ENCODE measurements at regions of chr5 and their contacts with region 1.

Region 1: GRCh38 chr5:119267958-119268386 is 87.8 kb upstream of the TNFAIP8 start:
- DNase-seq: peak; percentile 89
- H3K4me3 ChIP-seq: peak overlapping the region; percentile 72 to 81
- H3K27ac ChIP-seq: peak overlapping the region; percentile 86 to 93
- H3K4me1 ChIP-seq: peaks cover 5% of the 10 kb centered on the region
- H3K27me3 ChIP-seq: no peaks in the 10 kb centered on the region
- CTCF ChIP-seq: peak in 1 of 4 experiments; percentile 25
- POLR2A ChIP-seq: no peak

Region 2: DNA sequence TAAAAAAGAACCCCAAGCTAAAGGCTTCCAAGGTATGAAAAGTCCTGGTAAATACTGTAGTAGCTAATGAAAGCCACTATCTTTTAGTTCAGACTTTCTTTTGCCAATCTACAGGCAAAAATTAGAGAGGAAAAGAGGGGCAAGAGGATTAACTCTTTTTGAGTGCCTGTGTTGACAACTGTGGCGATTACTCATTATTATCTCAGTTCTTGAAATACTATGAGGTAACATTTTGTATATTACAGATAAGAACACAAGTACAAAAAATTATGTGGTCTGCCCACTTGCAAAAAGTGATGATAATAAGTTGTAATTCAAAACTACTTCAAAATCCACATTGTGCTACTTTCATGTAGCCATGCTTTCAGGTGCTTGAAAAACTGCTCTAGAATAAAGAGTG is 423.6 kb before region 1 on chr5:
- intact Hi-C with region 1: no loop called
- DNase-seq: no peak
- H3K4me3 ChIP-seq: no peak overlapping the region
- H3K27ac ChIP-seq: no peak overlapping the region
- H3K4me1 ChIP-seq: no peaks in the 10 kb centered on the region
- H3K27me3 ChIP-seq: no peaks in the 10 kb centered on the region
- CTCF ChIP-seq: no peak
- POLR2A ChIP-seq: no peak

Region 3: GRCh38 chr5:119070828-119071572 is 197.0 kb before region 1 on chr5 and contains the start of gene DMXL1:
- intact Hi-C with region 1: loop called (anchors 5 kb)
- DNase-seq: peak; percentile 100
- H3K4me3 ChIP-seq: peak within 1 kb of the TSS; percentile 84 to 91
- H3K27ac ChIP-seq: peak within 1 kb of the TSS; percentile 97 to 98
- H3K4me1 ChIP-seq: peaks cover 3% of the 10 kb centered on the region
- H3K27me3 ChIP-seq: no peaks in the 10 kb centered on the region
- CTCF ChIP-seq: peak in 1 of 4 experiments; percentile 8
- POLR2A ChIP-seq: peak; percentile 68
- total RNA-seq, gene DMXL1: 89.2 to 180 TPM

Region 4: DNA sequence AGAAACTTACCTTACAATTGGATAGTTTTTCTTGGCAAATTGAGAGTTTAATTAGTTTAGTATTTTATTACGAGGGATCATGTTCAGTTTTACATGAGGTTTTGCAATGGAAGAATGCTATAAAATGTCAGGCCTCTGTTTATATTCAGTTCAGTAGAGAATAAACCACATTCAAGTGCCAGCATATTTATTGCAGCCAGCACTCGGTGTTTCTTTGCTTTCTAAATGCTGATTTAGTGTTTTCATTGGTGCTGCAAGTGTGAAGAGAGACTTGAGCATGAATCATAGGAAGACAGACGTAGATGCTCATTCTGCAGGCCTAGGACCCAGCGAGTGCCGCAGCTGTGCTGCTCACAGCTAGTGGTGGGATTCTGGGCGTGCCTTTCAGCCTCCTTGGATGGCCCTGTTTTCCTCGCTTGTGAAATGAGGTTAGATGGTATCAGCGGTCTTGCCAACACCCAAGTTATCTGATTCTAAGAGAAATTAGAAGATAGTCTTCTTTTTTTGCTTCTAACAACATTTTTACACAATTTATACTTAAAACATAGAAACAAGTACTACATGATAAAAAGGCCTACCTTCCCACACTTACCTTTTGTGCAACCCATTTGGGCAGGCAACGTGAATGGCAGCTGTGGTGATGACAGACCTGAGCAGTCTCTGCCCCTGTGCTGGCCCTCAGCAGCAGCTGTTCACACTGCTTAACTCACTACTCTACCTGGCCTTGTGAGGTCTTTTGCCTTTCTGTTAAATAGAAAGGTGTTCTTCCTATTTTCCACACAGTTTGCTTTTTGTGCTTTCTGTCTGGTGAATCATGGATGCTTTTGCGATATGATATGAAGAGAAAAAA is 61.0 kb after region 1 on chr5:
- intact Hi-C with region 1: loop called (anchors 5 kb)
- DNase-seq: peak; percentile 77
- H3K4me3 ChIP-seq: no peak overlapping the region
- H3K27ac ChIP-seq: peak overlapping the region; percentile 14 to 62
- H3K4me1 ChIP-seq: peaks cover 15% of the 10 kb centered on the region
- H3K27me3 ChIP-seq: no peaks in the 10 kb centered on the region
- CTCF ChIP-seq: no peak
- POLR2A ChIP-seq: no peak

Region 5: DNA sequence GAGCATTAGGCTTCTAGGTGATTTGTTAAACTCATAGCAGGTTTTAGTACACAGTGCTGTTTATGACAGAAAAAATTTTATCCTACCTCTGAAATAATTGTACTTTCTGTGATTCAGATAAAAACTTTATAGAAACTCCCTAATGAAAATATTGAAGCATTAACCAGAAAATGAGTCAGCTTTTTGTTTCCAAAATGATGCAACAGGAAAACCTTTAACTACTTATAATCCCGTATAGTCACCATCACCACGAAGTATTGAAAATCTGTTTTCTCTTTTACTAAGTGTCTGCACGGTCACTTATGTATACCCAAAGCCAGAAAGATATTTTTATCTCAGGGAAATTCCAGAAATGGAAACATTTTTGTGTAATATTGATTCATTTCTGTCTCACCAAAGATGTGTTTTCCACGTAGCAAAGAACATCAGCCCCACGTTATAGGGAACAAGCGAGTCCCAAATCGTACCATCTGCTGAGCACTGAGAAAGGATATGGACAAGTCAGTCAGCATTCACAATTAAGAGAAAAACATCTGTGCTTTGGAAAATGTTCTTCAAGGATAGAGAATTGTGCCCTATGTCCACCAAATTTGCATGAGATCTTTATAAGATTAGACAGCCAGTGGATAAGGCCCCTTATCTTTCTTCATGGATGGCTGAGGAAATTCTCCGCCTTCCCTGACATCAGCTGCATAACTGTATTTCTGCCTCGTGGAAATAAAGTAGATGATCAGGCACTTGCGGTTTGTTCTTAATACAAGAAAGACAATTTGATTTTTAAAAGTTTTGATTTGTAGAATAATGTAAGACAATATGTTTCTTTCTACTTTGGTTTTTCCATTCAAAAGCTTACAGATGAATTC is 129.8 kb after region 1 on chr5:
- intact Hi-C with region 1: loop called (anchors 5 kb)
- DNase-seq: no peak
- H3K4me3 ChIP-seq: no peak overlapping the region
- H3K27ac ChIP-seq: no peak overlapping the region
- H3K4me1 ChIP-seq: no peaks in the 10 kb centered on the region
- H3K27me3 ChIP-seq: no peaks in the 10 kb centered on the region
- CTCF ChIP-seq: no peak
- POLR2A ChIP-seq: no peak

Measured in prostate gland (tissue), 2 donors.